GM12878 (cell line): ENCODE measurements at regions of chr9 and their contacts with region 1.

Region 1: DNA sequence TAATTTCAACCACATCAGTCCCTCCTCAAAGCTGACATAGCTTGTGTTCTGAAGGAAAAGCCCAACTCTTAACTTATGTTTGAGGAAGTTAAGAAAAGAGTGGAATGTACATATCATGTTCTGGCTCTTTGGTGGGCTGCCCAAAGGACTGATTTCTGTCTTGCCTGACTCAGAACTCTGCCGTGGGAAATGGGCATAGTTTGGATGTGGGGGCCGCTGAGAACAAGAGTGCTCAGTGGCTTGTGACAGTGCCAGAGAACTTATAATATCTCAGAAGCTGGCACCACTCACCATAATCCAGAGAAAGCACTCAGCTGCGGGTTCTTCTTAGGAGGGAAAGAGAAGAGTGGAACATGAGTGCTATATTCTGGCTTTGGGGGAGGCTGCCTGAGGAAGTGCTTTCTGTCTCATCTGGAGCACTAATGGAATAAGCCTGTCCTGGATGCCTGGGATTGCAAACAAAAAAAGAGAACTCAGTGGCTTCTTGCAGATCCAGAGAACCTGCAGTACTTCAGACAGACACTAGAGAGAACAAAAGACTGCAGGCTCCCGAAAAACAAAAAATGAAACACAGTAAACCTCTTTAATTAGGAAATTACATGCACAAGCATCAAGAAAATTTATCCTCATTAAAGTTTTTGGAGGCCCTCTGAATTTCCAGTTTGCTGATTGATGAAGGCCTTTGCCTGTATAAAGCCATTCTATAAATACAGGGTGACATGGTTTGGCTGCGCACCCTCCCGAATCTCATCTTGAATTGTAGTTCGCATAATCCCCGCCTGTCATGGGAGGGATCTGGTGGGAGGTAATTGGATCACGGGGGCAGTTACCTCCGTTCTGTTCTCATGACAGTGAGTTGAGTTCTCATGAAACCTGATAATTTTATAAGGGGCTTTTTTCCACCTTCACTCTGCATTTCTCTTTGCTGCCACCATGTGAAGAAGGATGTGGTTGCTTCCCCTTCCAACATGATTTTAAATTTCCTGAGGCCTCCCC is 207.0 kb downstream of the DMAC1 start:
- DNase-seq: no peak
- ATAC-seq: no peak
- H3K4me3 ChIP-seq: no peak overlapping the region
- H3K27ac ChIP-seq: no peak overlapping the region
- H3K4me1 ChIP-seq: no peaks in the 10 kb centered on the region
- H3K27me3 ChIP-seq: no peaks in the 10 kb centered on the region
- CTCF ChIP-seq: 0 out of 6 replicates have a peak, but pooled peaks have one; percentile 11 to 13 (median 12)
- EP300 ChIP-seq: no peak
- POLR2A ChIP-seq: no peak
- RAD21 ChIP-seq: no peak

Region 2: GRCh38 chr9:7234143-7234542 is 358.5 kb before region 1 on chr9:
- CTCF ChIA-PET with region 1: no interaction called
- POLR2A ChIA-PET with region 1: no interaction called
- RAD21 ChIA-PET with region 1: no interaction called
- SMC1A ChIA-PET with region 1: no interaction called
- in situ Hi-C with region 1: no loop called
- intact Hi-C with region 1: no loop called
- DNase-seq: no peak
- ATAC-seq: peak; percentile 80
- H3K4me3 ChIP-seq: no peak overlapping the region
- H3K27ac ChIP-seq: no peak overlapping the region
- H3K4me1 ChIP-seq: no peaks in the 10 kb centered on the region
- H3K27me3 ChIP-seq: no peaks in the 10 kb centered on the region
- CTCF ChIP-seq: peak; percentile 45 to 63 (median 52)
- EP300 ChIP-seq: no peak
- POLR2A ChIP-seq: no peak
- RAD21 ChIP-seq: peak; percentile 56

Region 3: DNA sequence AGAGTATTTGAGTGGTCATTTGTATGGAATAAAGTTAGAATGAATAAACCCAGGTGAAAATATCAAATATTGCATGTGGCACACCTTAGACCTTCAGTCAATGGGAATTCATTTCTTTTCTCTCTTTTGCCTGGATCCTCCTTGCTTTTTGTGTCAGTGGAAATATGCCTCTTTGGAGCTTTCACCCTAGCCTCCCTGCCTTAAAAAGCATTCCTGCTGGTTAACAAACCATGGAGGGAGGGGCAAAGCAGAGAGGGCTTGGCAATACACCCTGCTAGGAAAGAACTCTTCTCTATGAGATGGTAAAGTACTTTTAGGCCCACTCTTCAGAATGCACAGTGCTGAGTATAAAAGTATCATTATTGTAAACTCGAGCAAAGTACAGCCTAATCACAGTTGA is 176.8 kb before region 1 on chr9:
- CTCF ChIA-PET with region 1: no interaction called
- POLR2A ChIA-PET with region 1: no interaction called
- RAD21 ChIA-PET with region 1: no interaction called
- SMC1A ChIA-PET with region 1: no interaction called
- in situ Hi-C with region 1: no loop called
- intact Hi-C with region 1: no loop called
- DNase-seq: no peak
- ATAC-seq: no peak
- H3K4me3 ChIP-seq: no peak overlapping the region
- H3K27ac ChIP-seq: no peak overlapping the region
- H3K4me1 ChIP-seq: no peaks in the 10 kb centered on the region
- H3K27me3 ChIP-seq: no peaks in the 10 kb centered on the region
- CTCF ChIP-seq: no peak
- EP300 ChIP-seq: no peak
- POLR2A ChIP-seq: no peak
- RAD21 ChIP-seq: no peak

Region 4: GRCh38 chr9:7844242-7844641 is 251.6 kb after region 1 on chr9:
- CTCF ChIA-PET with region 1: no interaction called
- POLR2A ChIA-PET with region 1: no interaction called
- RAD21 ChIA-PET with region 1: no interaction called
- SMC1A ChIA-PET with region 1: no interaction called
- in situ Hi-C with region 1: loop called (anchors 25 kb)
- intact Hi-C with region 1: no loop called
- DNase-seq: no peak
- ATAC-seq: peak; percentile 87
- H3K4me3 ChIP-seq: no peak overlapping the region
- H3K27ac ChIP-seq: no peak overlapping the region
- H3K4me1 ChIP-seq: no peaks in the 10 kb centered on the region
- H3K27me3 ChIP-seq: no peaks in the 10 kb centered on the region
- CTCF ChIP-seq: peak; percentile 21 to 37 (median 28); a peak in 4 of 6 replicates
- EP300 ChIP-seq: no peak
- POLR2A ChIP-seq: no peak
- RAD21 ChIP-seq: peak; percentile 55